Activated CD4-positive, alpha-beta T cell treated with anti-CD3 and anti-CD28 coated beads for 36 hours (primary cell): ENCODE measurements at regions of chr18 and their contacts with region 1.

Region 1: GRCh38 chr18:13289481-13290205 is 71.1 kb downstream of the LDLRAD4 start:
- DNase-seq: no peak
- ATAC-seq: no peak
- H3K4me3 Mint-ChIP-seq: no peak overlapping the region
- H3K27ac Mint-ChIP-seq: peak overlapping the region; percentile 48
- H3K4me1 Mint-ChIP-seq: peaks cover 52% of the 10 kb centered on the region
- H3K27me3 Mint-ChIP-seq: no peaks in the 10 kb centered on the region

Region 2: GRCh38 chr18:13279181-13280069 is 10.2 kb before region 1 on chr18:
- CTCF ChIA-PET with region 1: interaction called, 20 read pairs
- POLR2A ChIA-PET with region 1: interaction called, 4 read pairs
- intact Hi-C with region 1: no loop called
- DNase-seq: peak; percentile 72
- ATAC-seq: peak; percentile 65
- H3K4me3 Mint-ChIP-seq: peak overlapping the region; percentile 62
- H3K27ac Mint-ChIP-seq: peak overlapping the region; percentile 79
- H3K4me1 Mint-ChIP-seq: peaks cover 84% of the 10 kb centered on the region
- H3K27me3 Mint-ChIP-seq: no peaks in the 10 kb centered on the region

Region 3: DNA sequence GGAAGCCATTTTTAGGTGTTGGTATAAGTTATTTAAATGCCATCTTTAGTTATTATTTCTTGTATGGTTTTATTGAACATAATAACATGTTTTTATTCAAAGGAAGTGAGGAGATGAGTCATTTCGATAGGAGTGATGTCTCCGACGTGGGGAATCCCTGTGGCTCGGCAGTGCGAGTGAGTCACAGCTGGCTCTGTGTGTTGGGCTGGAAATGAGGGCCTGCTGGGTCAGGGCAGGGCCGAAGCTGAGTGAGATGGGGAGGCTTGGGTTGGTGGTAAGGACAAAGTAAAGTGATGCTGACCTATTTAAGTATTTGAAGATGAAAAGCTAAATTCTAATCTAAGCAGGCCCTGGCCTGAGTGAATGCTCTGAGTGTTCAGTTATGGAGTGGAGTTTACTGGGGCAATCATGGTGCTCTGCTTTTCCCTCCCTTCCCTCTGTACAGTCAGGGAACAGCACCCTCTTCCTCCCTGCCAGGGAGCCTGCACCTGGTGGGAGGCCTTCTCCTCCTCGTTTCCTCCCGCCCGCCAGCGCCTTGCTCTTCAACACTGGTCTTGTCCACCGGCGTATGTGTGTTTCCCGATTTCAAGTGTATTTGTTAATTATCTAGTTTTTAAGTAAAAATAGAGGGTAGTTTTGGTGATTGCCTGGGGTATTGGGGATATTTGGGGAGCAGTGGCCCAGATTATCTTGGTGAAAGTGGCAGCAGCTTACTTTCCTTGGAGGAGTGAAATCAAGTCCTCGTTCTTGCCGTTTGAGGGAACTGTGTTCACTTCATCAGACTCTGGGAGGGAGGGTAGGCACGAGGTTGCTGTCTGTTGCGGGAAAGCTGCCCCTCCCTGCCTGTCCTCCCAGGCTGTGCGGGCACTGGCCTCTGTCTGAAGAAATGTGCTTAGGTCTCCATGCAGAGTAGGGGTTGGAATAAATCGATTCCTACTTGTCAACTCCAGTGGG is 85.9 kb after region 1 on chr18:
- CTCF ChIA-PET with region 1: no interaction called
- POLR2A ChIA-PET with region 1: interaction called, 6 read pairs
- intact Hi-C with region 1: loop called (anchors 1 to 2 kb)
- DNase-seq: peak; percentile 91
- ATAC-seq: peak; percentile 73
- H3K4me3 Mint-ChIP-seq: peak overlapping the region; percentile 63
- H3K27ac Mint-ChIP-seq: peak overlapping the region; percentile 97
- H3K4me1 Mint-ChIP-seq: peaks cover 84% of the 10 kb centered on the region
- H3K27me3 Mint-ChIP-seq: no peaks in the 10 kb centered on the region